OCI-LY7 (cell line): ENCODE measurements at regions of chr20 and their contacts with region 1.

Region 1: GRCh38 chr20:57680131-57680716 is 29.6 kb downstream of the PMEPA1 start:
- DNase-seq: peak; percentile 91
- H3K4me3 ChIP-seq: peak overlapping the region; percentile 64
- H3K27ac ChIP-seq: peak overlapping the region; percentile 99
- H3K4me1 ChIP-seq: peaks cover 92% of the 10 kb centered on the region
- CTCF ChIP-seq: no peak

Region 2: DNA sequence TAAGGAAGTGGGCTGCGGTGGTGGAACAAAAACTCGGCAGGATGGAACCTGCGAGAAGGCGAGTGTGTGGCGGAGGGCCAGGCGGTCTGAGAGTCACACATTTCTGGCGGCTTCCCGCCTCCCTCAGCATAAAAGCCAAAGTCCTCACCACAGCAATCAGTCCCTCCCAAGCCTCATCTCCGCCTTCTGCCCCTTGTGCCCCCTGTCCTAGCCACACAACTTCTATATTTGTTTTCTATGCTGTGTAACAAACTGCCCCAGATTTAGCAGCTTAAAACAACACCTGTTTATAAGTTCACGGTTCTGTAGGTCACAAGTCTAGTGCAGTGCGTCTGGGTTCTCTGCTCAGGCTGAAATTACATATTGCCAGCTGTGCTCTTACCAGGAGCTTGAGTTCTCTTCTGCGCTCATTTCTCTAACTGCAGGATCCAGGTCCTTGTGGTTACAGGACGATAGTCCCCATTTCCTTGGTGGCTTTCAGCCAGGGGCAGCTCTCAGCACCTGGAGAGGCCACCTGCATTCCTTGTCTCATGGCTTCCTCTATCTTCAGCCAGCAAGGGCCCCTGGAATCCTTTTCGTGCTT is 362.3 kb before region 1 on chr20:
- CTCF ChIA-PET with region 1: no interaction called
- POLR2A ChIA-PET with region 1: no interaction called
- intact Hi-C with region 1: loop called (anchors 5 kb)
- DNase-seq: peak; percentile 91
- H3K4me3 ChIP-seq: peak overlapping the region; percentile 37
- H3K27ac ChIP-seq: peak overlapping the region; percentile 95
- H3K4me1 ChIP-seq: peaks cover 100% of the 10 kb centered on the region
- CTCF ChIP-seq: no peak

Region 3: DNA sequence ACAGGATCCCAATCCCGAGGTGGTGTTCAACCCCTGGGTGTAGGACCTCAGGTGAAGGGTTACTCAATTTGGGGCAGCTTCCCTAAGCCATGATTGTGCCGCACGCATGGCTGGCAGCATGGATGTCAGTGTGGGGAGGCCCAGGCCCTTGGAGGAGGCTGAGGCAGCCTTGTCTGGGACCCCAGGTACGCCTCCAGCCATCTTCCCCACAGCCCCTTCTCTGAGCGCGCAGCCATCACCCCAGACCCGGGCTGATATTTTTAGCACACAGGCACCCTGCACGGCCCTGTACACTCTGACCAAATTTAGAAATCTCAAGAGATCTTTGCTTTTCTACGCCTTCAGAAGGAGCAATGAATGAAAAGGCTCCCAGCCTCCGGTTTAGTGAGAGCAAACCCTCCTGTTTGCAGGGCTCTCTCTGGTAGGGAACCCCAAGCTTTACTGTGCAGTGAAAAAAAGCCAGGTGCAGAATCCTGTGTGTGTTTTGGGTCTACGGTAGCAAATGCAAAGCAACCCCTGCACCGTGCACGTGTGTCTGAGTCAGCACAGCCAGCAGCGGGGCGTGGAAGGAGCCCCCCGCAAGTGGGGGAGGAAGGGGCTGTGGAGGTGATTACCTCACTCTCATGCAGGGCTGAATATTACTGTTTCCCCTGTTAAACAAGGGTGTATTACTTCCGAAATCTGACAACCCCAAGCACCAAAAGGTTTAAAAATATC is 199.6 kb before region 1 on chr20:
- CTCF ChIA-PET with region 1: no interaction called
- POLR2A ChIA-PET with region 1: no interaction called
- intact Hi-C with region 1: loop called (anchors 5 kb)
- DNase-seq: peak; percentile 95
- H3K4me3 ChIP-seq: peak overlapping the region; percentile 62
- H3K27ac ChIP-seq: peak overlapping the region; percentile 99
- H3K4me1 ChIP-seq: peaks cover 95% of the 10 kb centered on the region
- CTCF ChIP-seq: no peak

Region 4: GRCh38 chr20:57628047-57628961 is 51.9 kb before region 1 on chr20:
- CTCF ChIA-PET with region 1: interaction called, 3 read pairs
- POLR2A ChIA-PET with region 1: interaction called, 11 read pairs
- intact Hi-C with region 1: no loop called
- DNase-seq: peak; percentile 79
- H3K4me3 ChIP-seq: peak overlapping the region; percentile 20
- H3K27ac ChIP-seq: peak overlapping the region; percentile 93
- H3K4me1 ChIP-seq: peaks cover 47% of the 10 kb centered on the region
- CTCF ChIP-seq: no peak

Region 5: GRCh38 chr20:57709931-57710799 is 29.9 kb after region 1 on chr20 and contains the start of gene PMEPA1:
- CTCF ChIA-PET with region 1: interaction called, 6 read pairs
- POLR2A ChIA-PET with region 1: interaction called, 16 read pairs
- intact Hi-C with region 1: loop called (anchors 1 kb)
- DNase-seq: peak; percentile 89
- H3K4me3 ChIP-seq: peak within 1 kb of the TSS; percentile 75
- H3K27ac ChIP-seq: peak within 1 kb of the TSS; percentile 34
- H3K4me1 ChIP-seq: peaks cover 47% of the 10 kb centered on the region
- CTCF ChIP-seq: 0 out of 2 replicates have a peak, but pooled peaks have one; percentile 25
- total RNA-seq, gene PMEPA1: 1.4 and 1.8 TPM in 2 replicates